Activated T-helper 1 cell treated with anti-CD3 and anti-CD28 coated beads, Interleukin-12 subunit alpha, Interleukin-12 subunit beta, Interleukin-2, Interleukin-4 antibody, amounts not matched to agents 30 ng/mL and 10 ng/mL and 1 ng/mL, durations not matched to agents 14 hours and 24 hours and 36 hours (primary cell): ENCODE measurements at regions of chr14 and their contacts with region 1.

Region 1: GRCh38 chr14:52706724-52707706 is at the start of gene PSMC6:
- DNase-seq: peak; percentile 86
- H3K4me3 Mint-ChIP-seq: peak within 1 kb of the TSS; percentile 100
- H3K27ac Mint-ChIP-seq: peak within 1 kb of the TSS; percentile 97
- H3K4me1 Mint-ChIP-seq: peaks cover 41% of the 10 kb centered on the region
- H3K27me3 Mint-ChIP-seq: peaks cover 3% of the 10 kb centered on the region
- total RNA-seq, gene PSMC6: 130 and 132 TPM in 2 replicates

Region 2: DNA sequence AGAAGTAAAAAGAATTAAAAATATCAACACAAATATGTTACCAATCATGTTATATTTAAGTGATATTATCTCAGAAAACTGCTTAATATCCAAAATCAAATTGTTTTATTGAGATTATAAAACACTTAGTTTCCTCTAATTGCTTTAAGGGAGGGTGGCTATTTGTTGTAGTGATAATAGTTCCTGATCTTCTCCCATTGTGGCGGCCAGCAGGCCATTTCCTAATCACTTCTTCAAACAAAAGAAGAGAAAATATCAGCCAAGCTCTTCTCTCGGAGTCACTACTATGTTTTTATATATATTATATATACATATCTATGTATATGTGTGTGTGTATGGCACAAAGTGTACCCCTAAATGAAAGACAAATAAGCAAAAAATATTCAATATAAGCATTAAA is 43.2 kb before region 1 on chr14:
- intact Hi-C with region 1: loop called (anchors 5 kb)
- DNase-seq: no peak
- H3K4me3 Mint-ChIP-seq: no peak overlapping the region
- H3K27ac Mint-ChIP-seq: no peak overlapping the region
- H3K4me1 Mint-ChIP-seq: peaks cover 10% of the 10 kb centered on the region
- H3K27me3 Mint-ChIP-seq: no peaks in the 10 kb centered on the region

Region 3: GRCh38 chr14:52695481-52696091 is 11.4 kb before region 1 on chr14 and contains the start of gene ERO1A:
- intact Hi-C with region 1: loop called (anchors 1 kb)
- DNase-seq: peak; percentile 67
- H3K4me3 Mint-ChIP-seq: peak within 1 kb of the TSS; percentile 100
- H3K27ac Mint-ChIP-seq: peak within 1 kb of the TSS; percentile 99
- H3K4me1 Mint-ChIP-seq: peaks cover 42% of the 10 kb centered on the region
- H3K27me3 Mint-ChIP-seq: peaks cover 1% of the 10 kb centered on the region
- total RNA-seq, gene ERO1A: 144 and 158 TPM in 2 replicates

Region 4: GRCh38 chr14:52741865-52742264 is 34.9 kb after region 1 on chr14:
- intact Hi-C with region 1: loop called (anchors 1 kb)
- DNase-seq: no peak
- H3K4me3 Mint-ChIP-seq: peak overlapping the region; percentile 75
- H3K27ac Mint-ChIP-seq: peak overlapping the region; percentile 89
- H3K4me1 Mint-ChIP-seq: peaks cover 36% of the 10 kb centered on the region
- H3K27me3 Mint-ChIP-seq: no peaks in the 10 kb centered on the region

Region 5: DNA sequence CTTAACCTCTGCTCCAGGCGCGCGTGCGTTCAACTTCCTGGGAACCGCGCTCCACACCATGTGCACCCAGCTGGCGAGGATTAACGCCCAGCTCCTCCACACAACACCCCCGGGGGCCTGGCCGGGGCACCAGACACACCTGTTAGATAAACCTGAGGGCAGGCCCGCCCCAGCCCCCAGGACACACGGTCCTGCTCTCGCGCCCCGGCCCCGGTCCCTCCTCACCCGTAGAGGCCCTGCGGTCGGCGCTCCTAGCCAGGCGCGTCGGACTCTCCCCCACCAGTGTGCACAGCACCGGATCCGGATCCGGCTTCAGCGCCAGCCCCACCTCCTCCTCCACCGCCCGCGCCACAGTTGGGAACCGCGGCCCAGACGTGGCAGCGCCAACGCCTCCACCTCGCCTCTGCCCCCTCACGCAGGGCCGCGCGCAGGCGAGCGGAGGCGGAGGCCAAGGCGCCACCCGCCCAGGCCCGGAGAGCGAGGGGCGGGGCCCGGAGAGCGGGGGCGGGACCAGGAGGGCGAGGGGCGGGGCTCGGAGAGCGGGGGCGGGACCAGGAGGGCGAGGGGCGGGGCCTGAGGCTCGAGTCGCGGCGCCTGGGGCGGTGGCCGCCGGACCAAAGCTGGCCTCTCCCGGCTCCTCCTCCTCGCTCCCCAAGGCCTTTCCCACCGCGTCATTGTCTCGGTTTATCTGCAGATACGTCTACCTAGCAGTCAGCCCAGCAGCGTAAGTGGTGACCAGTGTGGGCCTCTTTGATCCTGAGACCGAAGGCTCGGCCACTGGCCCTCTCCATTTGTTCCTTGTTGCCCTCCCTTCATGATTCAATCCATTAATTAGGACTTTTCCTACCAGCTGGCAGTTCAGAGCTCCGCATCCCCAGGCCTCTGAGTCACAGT is 84.4 kb after region 1 on chr14 and contains the start of gene GNPNAT1:
- intact Hi-C with region 1: loop called (anchors 1 kb)
- DNase-seq: peak; percentile 85
- H3K4me3 Mint-ChIP-seq: peak within 1 kb of the TSS; percentile 92
- H3K27ac Mint-ChIP-seq: peak within 1 kb of the TSS; percentile 86
- H3K4me1 Mint-ChIP-seq: peaks cover 32% of the 10 kb centered on the region
- H3K27me3 Mint-ChIP-seq: no peaks in the 10 kb centered on the region
- total RNA-seq, gene GNPNAT1: 26.0 and 26.4 TPM in 2 replicates